ENCODE measurements at regions of chr2 and their contacts with region 1.

Region 1: DNA sequence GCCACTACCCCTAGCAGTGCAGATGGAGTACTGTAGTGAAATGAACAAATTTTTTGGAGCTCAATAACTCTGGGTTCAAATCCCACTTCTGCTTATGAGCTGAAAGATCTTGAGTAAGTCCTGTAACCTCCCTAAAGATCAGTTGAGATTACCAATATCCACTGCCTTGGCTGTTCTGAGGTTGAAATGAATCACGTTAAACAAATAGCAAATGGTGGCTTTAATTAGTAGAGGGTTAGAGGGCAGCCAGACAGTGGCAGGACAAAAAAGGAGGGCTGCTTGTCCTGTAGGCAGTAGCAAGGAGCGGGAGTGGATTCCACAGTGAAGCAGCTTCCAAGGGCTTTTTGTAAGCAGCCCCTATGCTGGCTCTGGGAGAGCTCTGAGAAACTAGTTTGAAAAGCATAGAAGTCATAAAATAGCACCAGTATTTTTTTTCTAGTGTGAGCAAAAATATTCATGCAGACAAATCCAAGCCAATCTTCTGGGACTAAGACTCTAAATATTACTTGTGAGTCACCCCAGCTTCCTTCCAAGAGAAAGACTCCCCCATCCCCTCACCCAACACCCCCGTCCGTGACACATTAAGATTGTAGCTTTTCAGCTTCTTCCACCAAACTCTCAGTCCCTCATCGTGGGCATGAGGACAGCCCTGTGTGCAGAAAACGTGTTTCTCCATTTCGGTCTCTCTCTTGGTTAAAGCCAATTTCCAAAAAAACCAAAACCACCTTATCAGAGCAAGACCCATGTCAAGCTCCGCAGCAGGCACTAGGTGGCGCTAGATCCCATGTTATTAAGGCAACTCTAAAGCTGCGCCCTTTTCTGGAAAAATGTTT is 123.5 kb upstream of the LGALSL start:
- DNase-seq: peak; percentile 69
- ATAC-seq: no peak
- H3K4me3 Mint-ChIP-seq: peak overlapping the region; percentile 68
- H3K27ac Mint-ChIP-seq: peak overlapping the region; percentile 64
- H3K4me1 Mint-ChIP-seq: peaks cover 39% of the 10 kb centered on the region
- H3K27me3 Mint-ChIP-seq: no peaks in the 10 kb centered on the region

Region 2: DNA sequence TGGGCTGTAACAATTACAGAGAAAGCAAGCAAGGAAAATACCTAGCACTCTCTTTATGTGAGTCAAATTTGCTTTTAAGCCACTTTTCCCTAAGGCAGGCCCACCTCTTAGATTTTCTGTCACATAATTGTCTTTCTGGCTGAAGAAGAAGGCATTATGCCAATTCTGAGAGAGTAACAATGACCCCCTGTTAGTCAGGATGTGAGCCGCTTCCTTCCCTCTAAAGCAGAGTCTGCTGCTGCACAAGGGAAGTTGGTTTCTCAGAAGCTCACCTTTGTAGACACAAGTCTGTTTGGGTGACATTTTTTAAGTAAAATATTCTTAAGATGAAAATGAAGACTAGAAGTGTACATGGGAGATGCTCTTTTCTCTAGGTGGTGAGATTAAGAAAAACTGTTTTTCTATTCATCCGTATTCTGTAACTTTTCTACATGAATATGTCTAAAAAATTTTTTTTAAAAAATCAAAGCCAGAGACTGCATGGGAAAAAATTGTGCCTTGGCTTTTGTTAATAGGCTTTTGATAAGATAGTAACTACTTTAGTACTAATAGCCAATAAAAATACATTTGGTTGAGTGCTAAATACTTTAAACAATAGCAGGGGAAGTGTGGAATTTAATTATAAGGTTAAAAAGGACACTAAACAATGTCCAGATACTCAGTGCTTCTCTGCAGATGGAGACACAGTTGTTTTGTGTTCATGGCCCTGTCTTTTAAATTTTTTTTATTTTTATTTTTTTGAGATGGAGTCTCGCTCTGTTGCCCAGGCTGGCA is 277.8 kb before region 1 on chr2:
- POLR2A ChIA-PET with region 1: interaction called, 25 read pairs
- DNase-seq: no peak
- ATAC-seq: peak; percentile 45
- H3K4me3 Mint-ChIP-seq: peak overlapping the region; percentile 33
- H3K27ac Mint-ChIP-seq: no peak overlapping the region
- H3K4me1 Mint-ChIP-seq: peaks cover 37% of the 10 kb centered on the region
- H3K27me3 Mint-ChIP-seq: no peaks in the 10 kb centered on the region

Region 3: GRCh38 chr2:64318476-64318748 is 12.1 kb before region 1 on chr2:
- POLR2A ChIA-PET with region 1: no interaction called
- DNase-seq: no peak
- ATAC-seq: no peak
- H3K4me3 Mint-ChIP-seq: no peak overlapping the region
- H3K27ac Mint-ChIP-seq: no peak overlapping the region
- H3K4me1 Mint-ChIP-seq: peaks cover 3% of the 10 kb centered on the region
- H3K27me3 Mint-ChIP-seq: peaks cover 13% of the 10 kb centered on the region

Region 4: DNA sequence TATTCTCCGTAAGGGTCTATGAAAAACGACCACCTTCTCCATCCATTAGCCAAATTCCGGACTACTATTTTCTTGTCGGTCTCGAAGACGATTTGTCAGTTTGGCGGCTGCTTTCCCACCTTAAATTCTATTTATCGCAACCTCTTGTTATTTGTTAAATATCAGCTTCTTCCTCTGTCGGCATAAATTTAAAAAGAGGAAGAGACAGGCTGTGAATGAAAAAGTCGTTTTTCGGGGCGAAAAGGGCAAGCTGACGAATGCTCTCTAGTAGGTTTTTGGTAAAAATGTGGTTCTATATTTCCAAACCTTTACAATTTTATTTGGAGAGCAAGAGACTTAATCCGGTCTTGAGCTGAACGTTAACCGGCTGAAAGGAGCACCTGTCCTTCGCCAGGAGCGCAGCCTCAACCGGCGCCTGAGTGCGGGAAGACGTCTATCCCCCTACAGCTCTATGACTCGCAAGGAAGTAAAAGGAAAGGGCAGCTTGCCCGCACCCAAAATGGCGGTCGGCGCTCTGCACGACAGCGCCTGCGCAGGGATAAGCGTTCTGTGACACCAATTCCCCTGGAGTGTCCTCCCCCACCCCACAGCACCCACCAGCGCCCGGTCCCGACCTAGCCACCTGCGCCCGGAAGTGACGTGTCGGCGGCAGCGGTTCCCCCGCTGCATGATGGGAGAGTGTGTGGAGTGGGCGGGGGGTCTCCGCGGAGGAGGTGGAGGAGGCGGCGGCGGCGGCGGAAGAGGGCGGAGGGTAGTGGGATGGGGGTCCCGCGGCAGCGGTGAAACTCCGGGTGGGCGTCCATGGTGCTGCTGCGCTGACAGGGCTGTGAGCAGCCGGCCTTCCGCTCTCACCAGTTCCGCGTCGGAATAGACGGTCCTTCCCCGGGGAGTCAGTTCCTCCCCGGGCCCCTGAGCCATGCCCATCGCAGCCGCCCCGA is 193.4 kb after region 1 on chr2 and contains the start of gene AFTPH:
- POLR2A ChIA-PET with region 1: interaction called, 10 read pairs
- DNase-seq: peak; percentile 98
- ATAC-seq: peak; percentile 94
- H3K4me3 Mint-ChIP-seq: peak within 1 kb of the TSS; percentile 99
- H3K27ac Mint-ChIP-seq: peak within 1 kb of the TSS; percentile 99
- H3K4me1 Mint-ChIP-seq: peaks cover 33% of the 10 kb centered on the region
- H3K27me3 Mint-ChIP-seq: peaks cover 5% of the 10 kb centered on the region
- total RNA-seq, gene AFTPH: 34.3 to 38.9 TPM